ENCODE measurements at regions of chr7 and their contacts with region 1.

Region 1: GRCh38 chr7:40232242-40232893 is 97.6 kb downstream of the SUGCT start:
- DNase-seq: no peak
- ATAC-seq: 0 out of 3 replicates have a peak, but pooled peaks have one; percentile 36
- H3K4me3 ChIP-seq: no peak overlapping the region
- H3K27ac ChIP-seq: no peak overlapping the region
- H3K4me1 ChIP-seq: no peaks in the 10 kb centered on the region
- H3K27me3 ChIP-seq: no peaks in the 10 kb centered on the region
- CTCF ChIP-seq: peak; percentile 34 to 45 (median 41); a peak in 5 of 6 replicates
- EP300 ChIP-seq: no peak
- POLR2A ChIP-seq: no peak
- RAD21 ChIP-seq: peak; percentile 71

Region 2: GRCh38 chr7:40329601-40330153 is 97.3 kb after region 1 on chr7:
- CTCF ChIA-PET with region 1: no interaction called
- POLR2A ChIA-PET with region 1: no interaction called
- RAD21 ChIA-PET with region 1: interaction called, 3 read pairs
- SMC1A ChIA-PET with region 1: no interaction called
- in situ Hi-C with region 1: no loop called
- intact Hi-C with region 1: loop called (anchors 10 kb)
- DNase-seq: no peak
- ATAC-seq: no peak
- H3K4me3 ChIP-seq: no peak overlapping the region
- H3K27ac ChIP-seq: no peak overlapping the region
- H3K4me1 ChIP-seq: no peaks in the 10 kb centered on the region
- H3K27me3 ChIP-seq: no peaks in the 10 kb centered on the region
- CTCF ChIP-seq: peak; percentile 52 to 62 (median 59); a peak in 5 of 6 replicates
- EP300 ChIP-seq: no peak
- POLR2A ChIP-seq: no peak
- RAD21 ChIP-seq: peak; percentile 83

Region 3: DNA sequence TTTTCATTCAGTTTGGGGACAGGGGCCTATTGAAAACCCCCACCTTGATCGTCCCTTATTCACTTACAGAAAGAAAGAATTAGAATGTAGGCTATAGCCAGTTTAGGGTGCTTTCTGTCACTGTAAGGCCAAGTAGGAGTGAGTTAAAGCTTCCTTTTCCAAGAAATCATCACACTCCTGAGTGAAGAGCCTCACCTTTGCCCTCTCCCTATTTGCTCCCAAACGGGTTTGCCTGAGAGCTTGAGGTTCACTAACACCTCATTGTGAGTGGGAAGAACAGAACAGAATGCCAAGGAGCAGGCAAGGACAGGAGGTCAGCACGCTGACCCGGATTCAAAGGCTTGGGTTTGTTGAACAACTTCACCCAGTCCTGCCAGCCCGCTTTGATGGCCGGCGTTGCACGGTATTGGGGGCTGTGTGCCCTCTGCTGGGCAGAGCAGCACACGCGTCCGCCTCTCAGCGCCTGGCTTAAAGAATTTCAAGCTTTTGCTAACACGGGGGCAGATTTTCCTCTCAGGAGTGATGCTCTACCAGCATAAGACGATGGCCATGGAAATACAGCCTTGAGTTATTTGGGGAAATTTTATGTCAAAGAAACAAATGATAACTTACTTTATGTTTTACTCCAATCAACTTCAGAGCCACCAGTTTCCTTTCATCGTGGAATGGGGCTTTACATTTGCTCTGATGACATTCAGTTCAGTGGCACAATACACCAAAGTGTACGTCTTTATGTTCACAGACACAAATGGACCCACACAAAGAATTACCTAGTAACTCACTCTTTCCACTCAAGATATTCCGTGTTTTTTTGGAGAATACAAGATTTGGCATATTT is 372.5 kb after region 1 on chr7:
- CTCF ChIA-PET with region 1: interaction called, 4 read pairs
- POLR2A ChIA-PET with region 1: no interaction called
- RAD21 ChIA-PET with region 1: interaction called, 4 read pairs
- SMC1A ChIA-PET with region 1: interaction called, 4 read pairs
- in situ Hi-C with region 1: no loop called
- intact Hi-C with region 1: loop called (anchors 5 kb)
- DNase-seq: no peak
- ATAC-seq: peak; percentile 99
- H3K4me3 ChIP-seq: no peak overlapping the region
- H3K27ac ChIP-seq: no peak overlapping the region
- H3K4me1 ChIP-seq: no peaks in the 10 kb centered on the region
- H3K27me3 ChIP-seq: no peaks in the 10 kb centered on the region
- CTCF ChIP-seq: peak; percentile 62 to 77 (median 74)
- EP300 ChIP-seq: no peak
- POLR2A ChIP-seq: no peak
- RAD21 ChIP-seq: peak; percentile 63